A673 (cell line): ENCODE measurements at regions of chr18 and their contacts with region 1.

Region 1: GRCh38 chr18:76803814-76804213 is 18.5 kb upstream of the ZNF236 start:
- DNase-seq: peak; percentile 86
- H3K4me3 ChIP-seq: peak overlapping the region; percentile 23
- H3K27ac ChIP-seq: no peak overlapping the region
- H3K4me1 ChIP-seq: no peaks in the 10 kb centered on the region
- H3K27me3 ChIP-seq: no peaks in the 10 kb centered on the region
- CTCF ChIP-seq: peak; percentile 92

Region 2: DNA sequence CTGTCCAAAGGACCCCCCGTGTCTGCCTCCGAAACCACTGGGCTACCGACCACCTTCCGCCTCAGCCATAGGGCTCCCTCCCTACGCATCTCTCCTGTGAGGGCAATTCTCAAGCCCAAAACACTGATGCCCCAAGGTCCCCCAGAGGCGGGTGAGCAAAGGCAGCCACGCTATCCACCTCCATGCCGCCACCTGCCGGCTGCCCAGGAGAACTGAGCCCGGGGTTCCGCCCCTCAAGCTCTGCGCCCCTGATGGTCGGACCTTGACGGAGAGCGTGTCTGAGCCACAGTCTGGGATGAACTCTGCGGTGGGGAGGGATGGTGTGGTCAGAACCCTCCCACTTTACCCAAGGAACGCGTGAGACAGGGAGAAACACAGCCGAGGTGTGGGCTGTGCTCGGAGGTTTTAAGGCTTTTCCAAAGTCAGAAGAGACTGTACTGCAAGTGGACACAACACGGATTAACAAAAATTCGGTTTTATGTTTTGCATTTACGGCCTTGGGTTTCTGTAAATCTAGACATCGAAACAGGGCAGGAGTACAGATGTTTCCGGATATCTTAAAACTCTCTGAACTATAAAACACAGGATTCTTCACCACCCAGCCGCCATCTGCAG is 422.9 kb before region 1 on chr18:
- CTCF ChIA-PET with region 1: no interaction called
- POLR2A ChIA-PET with region 1: no interaction called
- intact Hi-C with region 1: no loop called
- DNase-seq: peak; percentile 42
- H3K4me3 ChIP-seq: no peak overlapping the region
- H3K27ac ChIP-seq: no peak overlapping the region
- H3K4me1 ChIP-seq: no peaks in the 10 kb centered on the region
- H3K27me3 ChIP-seq: no peaks in the 10 kb centered on the region
- CTCF ChIP-seq: peak; percentile 69

Region 3: DNA sequence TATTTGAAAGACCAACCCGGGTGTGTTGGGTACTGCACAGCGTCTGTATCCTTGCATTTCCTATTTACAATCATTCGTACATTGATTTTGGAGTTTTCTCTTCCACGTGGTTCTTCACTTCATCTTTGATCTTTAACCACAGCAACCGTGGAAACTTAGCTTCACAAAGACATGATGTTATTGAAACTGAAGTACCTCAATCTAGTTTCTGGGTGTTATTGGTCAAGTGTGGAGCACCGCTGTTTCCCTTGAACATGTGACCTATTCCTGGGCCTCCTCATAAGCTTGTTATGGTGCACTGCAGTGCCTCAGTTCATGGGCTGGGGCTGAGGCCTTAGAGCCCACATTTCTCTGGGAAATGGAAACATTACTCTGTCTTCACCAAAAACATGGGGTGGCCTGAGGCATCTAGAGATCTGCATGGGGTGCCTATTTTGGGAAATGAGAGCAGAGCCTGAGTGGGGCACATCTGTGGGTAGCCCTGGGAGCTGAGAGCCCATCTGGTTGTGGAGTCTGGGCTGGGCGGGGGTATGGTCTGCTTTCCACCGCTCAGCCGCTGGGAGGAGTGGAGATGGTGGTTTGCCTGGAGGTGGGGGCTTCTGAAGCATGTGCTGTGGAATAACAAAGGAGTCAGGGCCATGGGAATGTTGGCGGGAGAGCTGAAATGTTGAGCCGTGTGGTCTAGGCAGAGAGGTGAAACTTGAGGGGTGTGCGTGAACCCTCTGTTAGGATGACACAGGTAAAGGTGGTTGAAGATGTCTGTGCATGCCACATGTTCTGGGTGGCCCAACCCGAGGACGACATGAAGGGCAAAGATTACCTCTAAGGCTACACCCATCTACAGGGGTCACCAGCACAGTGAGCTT is 55.9 kb after region 1 on chr18:
- CTCF ChIA-PET with region 1: no interaction called
- POLR2A ChIA-PET with region 1: no interaction called
- intact Hi-C with region 1: no loop called
- DNase-seq: no peak
- H3K4me3 ChIP-seq: no peak overlapping the region
- H3K27ac ChIP-seq: no peak overlapping the region
- H3K4me1 ChIP-seq: no peaks in the 10 kb centered on the region
- H3K27me3 ChIP-seq: no peaks in the 10 kb centered on the region
- CTCF ChIP-seq: no peak

Region 4: DNA sequence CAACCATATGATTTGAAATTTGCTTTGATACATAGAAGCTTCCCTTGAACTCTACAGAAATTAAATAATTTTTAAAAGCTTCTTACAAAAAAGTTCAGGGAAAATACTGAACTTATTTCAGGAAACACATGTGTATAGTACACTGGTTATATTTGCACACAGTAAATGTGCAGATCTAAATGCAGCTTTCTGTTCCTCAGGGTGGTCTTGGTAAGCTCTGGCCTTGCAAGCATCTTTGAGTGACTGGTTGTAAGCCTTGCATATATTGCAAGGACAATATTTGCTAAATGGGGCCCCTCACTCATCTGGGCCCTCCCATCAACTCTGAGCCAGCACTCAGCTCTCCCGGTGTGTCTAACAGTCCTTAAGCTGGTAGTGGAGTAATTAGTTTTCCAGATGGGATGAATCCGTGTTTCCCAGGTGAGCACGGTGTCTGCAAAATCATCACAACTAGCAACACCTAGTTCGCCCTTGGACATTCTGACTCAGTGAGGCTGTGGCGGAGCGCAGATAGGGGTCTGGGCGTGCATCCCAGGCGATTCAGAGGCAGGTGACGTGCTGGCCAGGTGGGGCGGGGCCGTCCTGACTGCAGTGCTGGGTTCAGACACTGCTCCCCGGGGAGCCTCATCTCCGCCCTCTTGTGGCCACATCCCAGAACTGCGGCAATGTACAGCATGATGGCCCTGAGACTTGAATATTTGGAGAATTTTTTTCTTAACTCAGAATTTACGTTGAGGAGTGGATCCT is 179.2 kb after region 1 on chr18:
- CTCF ChIA-PET with region 1: interaction called, 8 read pairs
- POLR2A ChIA-PET with region 1: no interaction called
- intact Hi-C with region 1: loop called (anchors 1 kb)
- DNase-seq: peak; percentile 76
- H3K4me3 ChIP-seq: no peak overlapping the region
- H3K27ac ChIP-seq: no peak overlapping the region
- H3K4me1 ChIP-seq: no peaks in the 10 kb centered on the region
- H3K27me3 ChIP-seq: no peaks in the 10 kb centered on the region
- CTCF ChIP-seq: peak; percentile 92

Region 5: GRCh38 chr18:77032181-77032701 is 228.4 kb after region 1 on chr18:
- CTCF ChIA-PET with region 1: no interaction called
- POLR2A ChIA-PET with region 1: no interaction called
- intact Hi-C with region 1: no loop called
- DNase-seq: peak; percentile 20
- H3K4me3 ChIP-seq: no peak overlapping the region
- H3K27ac ChIP-seq: no peak overlapping the region
- H3K4me1 ChIP-seq: no peaks in the 10 kb centered on the region
- H3K27me3 ChIP-seq: peaks cover 7% of the 10 kb centered on the region
- CTCF ChIP-seq: no peak

Region 6: DNA sequence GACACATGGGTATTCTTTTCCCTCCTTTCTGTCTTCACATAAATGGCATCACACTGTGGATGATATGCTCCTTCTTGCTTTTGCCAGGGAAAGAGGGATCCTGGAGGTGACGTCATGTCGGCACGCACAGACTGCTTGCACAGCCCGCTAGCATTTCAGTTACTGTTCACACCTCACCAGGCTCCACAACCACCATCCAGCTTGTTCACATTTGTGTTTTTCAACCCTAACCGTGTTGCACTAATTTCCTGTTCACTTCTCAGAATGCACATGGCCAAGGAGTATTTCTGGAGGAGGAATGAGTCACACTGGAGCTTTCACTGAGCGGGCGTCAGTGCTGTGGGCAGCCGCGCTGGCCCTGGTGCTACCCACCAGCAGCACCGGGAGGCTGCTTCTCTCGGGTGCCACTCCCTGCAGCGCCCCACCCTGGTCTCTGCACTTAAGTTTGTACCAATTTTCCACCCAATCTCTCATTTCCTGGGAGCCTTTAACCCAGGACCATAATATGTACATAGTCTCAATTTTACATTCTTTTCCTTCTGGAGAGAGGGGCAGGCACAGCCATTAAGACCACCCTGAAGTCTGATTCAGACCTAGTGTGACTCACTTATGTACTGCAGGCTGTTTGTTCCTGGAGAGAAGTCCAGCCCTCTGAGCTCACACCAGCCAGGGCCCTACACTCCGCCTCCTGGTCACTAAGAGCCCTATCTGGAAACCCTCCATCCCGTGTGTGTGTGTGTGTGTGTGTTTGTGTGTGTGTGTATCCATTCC is 263.7 kb after region 1 on chr18:
- CTCF ChIA-PET with region 1: no interaction called
- POLR2A ChIA-PET with region 1: no interaction called
- intact Hi-C with region 1: loop called (anchors 10 kb)
- DNase-seq: peak; percentile 7
- H3K4me3 ChIP-seq: no peak overlapping the region
- H3K27ac ChIP-seq: no peak overlapping the region
- H3K4me1 ChIP-seq: no peaks in the 10 kb centered on the region
- H3K27me3 ChIP-seq: no peaks in the 10 kb centered on the region
- CTCF ChIP-seq: no peak